ENCODE measurements at regions of chr12 and their contacts with region 1.

Region 1: GRCh38 chr12:110449799-110450497 is at the start of gene ARPC3:
- DNase-seq: peak; percentile 90 to 98 (median 94)
- ATAC-seq: peak; percentile 95
- H3K4me3 ChIP-seq: peak within 1 kb of the TSS; percentile 84
- H3K4me3 Mint-ChIP-seq: peak within 1 kb of the TSS; percentile 100
- H3K27ac ChIP-seq: peak within 1 kb of the TSS; percentile 92 to 94
- H3K27ac Mint-ChIP-seq: peak within 1 kb of the TSS; percentile 96
- H3K4me1 ChIP-seq: peaks cover 41% of the 10 kb centered on the region
- H3K4me1 Mint-ChIP-seq: peaks cover 47% of the 10 kb centered on the region
- H3K27me3 ChIP-seq: no peaks in the 10 kb centered on the region
- H3K27me3 Mint-ChIP-seq: no peaks in the 10 kb centered on the region
- CTCF ChIP-seq: peak; percentile 81
- total RNA-seq, gene ARPC3: 120 to 124 TPM

Region 2: DNA sequence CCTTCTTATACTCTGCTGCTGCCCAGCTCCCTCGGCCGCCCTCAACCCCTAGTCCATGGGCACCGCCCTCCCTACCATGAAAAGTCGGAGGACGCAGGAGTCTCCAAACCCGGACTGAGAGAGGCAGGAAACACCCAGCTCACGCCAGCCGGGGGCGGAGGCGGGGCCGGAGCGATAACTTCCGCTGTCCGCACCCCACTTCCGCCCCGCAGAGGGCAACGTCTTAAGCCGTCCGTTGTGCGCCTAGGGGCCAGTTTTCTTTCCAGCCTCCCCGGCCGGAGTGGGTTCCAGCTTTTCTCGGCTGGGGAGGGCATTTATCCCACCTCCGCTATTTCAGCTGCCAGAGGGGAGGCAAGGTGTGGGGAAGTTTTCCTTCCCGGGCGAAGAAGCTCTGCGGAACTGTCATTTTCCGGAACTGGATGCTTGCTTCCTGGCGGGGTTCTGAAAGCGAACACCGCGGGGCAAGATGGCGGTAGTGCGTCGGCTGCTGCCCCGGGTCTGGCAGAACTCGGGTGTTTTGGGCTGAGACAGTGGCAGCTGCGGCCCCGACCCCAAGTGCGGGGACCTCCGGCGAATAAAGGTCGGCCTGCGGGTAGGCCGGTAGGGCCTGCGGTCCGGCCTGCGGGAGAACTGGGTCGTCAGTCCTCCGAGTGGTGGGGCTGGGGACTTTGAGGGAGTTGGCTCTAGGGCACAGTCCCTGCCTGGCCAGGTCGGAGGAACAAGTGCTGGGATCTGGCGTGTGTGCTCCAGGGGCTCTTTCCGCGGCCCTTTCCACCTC is 972.6 kb before region 1 on chr12 and contains the starts of genes KCTD10 and UBE3B:
- CTCF ChIA-PET with region 1: interaction called, 3 read pairs
- POLR2A ChIA-PET with region 1: no interaction called
- intact Hi-C with region 1: loop called in 1 of 2 experiments (anchors 5 kb)
- DNase-seq: peak; percentile 74 to 93 (median 82)
- ATAC-seq: peak; percentile 91
- H3K4me3 ChIP-seq: peak within 1 kb of the TSS; percentile 90
- H3K4me3 Mint-ChIP-seq: peak within 1 kb of the TSS; percentile 98
- H3K27ac ChIP-seq: peak within 1 kb of the TSS; percentile 73 to 87
- H3K27ac Mint-ChIP-seq: peak within 1 kb of the TSS; percentile 92
- H3K4me1 ChIP-seq: peaks cover 30% of the 10 kb centered on the region
- H3K4me1 Mint-ChIP-seq: peaks cover 50% of the 10 kb centered on the region
- H3K27me3 ChIP-seq: no peaks in the 10 kb centered on the region
- H3K27me3 Mint-ChIP-seq: no peaks in the 10 kb centered on the region
- CTCF ChIP-seq: no peak
- total RNA-seq, gene KCTD10: 24.2 to 26.1 TPM
- total RNA-seq, gene UBE3B: 17.2 to 19.9 TPM

Region 3: DNA sequence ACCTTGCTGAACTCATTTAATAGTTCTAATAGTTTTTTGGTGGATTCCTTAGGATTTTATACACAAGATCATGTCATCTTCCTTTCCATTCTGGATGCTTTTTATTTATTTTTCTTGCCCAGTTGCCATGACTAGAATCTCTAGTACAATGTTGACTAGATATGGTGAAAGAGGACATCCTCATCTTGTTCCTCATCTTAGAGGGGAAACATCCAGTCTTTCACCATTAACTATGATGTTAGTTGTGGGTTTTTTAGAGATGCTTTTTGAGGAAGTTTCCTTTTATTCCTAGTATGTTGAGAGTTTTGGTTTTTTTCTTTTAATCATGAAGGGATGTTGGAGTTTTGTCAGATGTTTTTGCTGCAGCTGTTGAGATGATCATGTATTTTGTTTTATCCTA is 442.1 kb before region 1 on chr12:
- CTCF ChIA-PET with region 1: no interaction called
- POLR2A ChIA-PET with region 1: no interaction called
- intact Hi-C with region 1: no loop called
- DNase-seq: peak in 2 of 14 experiments; percentile 32 to 46
- ATAC-seq: no peak
- H3K4me3 ChIP-seq: no peak overlapping the region
- H3K4me3 Mint-ChIP-seq: peak overlapping the region; percentile 17
- H3K27ac ChIP-seq: no peak overlapping the region
- H3K27ac Mint-ChIP-seq: peak overlapping the region; percentile 32
- H3K4me1 ChIP-seq: peaks cover 54% of the 10 kb centered on the region
- H3K4me1 Mint-ChIP-seq: peaks cover 82% of the 10 kb centered on the region
- H3K27me3 ChIP-seq: no peaks in the 10 kb centered on the region
- H3K27me3 Mint-ChIP-seq: no peaks in the 10 kb centered on the region
- CTCF ChIP-seq: no peak

Region 4: DNA sequence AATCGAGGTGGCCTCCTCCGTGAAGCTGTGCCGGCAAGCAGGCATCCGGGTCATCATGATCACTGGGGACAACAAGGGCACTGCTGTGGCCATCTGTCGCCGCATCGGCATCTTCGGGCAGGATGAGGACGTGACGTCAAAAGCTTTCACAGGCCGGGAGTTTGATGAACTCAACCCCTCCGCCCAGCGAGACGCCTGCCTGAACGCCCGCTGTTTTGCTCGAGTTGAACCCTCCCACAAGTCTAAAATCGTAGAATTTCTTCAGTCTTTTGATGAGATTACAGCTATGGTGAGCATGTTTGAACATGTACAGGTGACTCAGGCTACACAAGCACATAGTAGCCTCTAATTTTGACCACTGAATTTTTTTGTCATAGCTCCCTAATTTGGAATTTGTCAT is 109.2 kb before region 1 on chr12:
- CTCF ChIA-PET with region 1: no interaction called
- POLR2A ChIA-PET with region 1: no interaction called
- intact Hi-C with region 1: no loop called
- DNase-seq: no peak
- ATAC-seq: no peak
- H3K4me3 ChIP-seq: no peak overlapping the region
- H3K4me3 Mint-ChIP-seq: no peak overlapping the region
- H3K27ac ChIP-seq: no peak overlapping the region
- H3K27ac Mint-ChIP-seq: no peak overlapping the region
- H3K4me1 ChIP-seq: no peaks in the 10 kb centered on the region
- H3K4me1 Mint-ChIP-seq: no peaks in the 10 kb centered on the region
- H3K27me3 ChIP-seq: no peaks in the 10 kb centered on the region
- H3K27me3 Mint-ChIP-seq: no peaks in the 10 kb centered on the region
- CTCF ChIP-seq: no peak

Region 5: DNA sequence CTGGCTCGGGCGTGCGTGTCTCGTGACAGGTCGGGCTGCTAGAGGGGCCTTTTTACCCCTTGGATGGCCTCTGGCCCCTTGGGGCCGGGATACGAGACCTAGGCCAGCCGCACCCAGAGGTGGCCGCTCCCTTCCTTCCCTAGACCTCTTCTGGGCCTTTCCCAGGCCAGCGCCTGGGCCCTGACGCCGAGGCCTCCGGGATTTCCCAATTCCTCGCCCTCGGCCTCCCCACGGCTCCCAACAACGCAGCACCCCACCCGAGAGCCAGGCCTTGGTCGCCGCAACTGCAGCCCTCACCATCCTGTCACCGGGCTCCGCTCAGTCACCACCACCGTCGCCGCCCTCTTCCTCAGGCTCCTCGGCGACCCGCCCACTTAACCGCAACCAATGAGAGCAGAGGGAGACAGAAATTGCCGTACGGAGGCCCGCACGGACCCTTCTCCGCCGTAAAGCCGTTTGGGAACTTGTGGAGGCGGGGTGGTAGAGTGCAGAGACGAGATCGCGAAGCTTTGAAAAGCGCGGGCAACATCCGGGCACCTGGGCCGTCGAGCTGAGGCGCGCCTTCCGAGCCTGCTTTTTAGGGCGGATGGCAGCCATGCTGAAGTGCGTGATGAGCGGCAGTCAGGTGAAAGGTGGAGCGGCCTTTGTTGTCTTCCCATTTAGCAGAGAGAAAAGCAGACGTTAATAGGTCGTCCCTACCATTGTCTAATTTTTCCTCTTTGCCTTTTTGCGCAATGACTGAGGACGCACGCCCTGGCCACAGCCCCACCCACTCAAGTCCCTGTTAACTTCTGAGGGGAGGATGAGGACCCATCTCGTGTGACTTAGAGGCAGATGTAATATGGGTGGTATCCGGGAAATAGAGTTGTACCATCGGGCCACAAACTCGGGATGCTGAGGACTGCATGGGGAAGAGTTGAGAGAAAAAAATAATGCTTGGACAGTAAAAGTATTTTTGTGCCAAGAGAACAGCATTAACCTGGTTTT is 52.1 kb after region 1 on chr12 and contains the starts of genes RAD9B and VPS29:
- CTCF ChIA-PET with region 1: interaction called, 48 read pairs
- POLR2A ChIA-PET with region 1: interaction called, 14 read pairs
- intact Hi-C with region 1: loop called (anchors 1 to 2 kb)
- DNase-seq: peak; percentile 97 to 100 (median 98)
- ATAC-seq: peak; percentile 92
- H3K4me3 ChIP-seq: peak within 1 kb of the TSS; percentile 96
- H3K4me3 Mint-ChIP-seq: peak within 1 kb of the TSS; percentile 98
- H3K27ac ChIP-seq: peak within 1 kb of the TSS; percentile 90 to 93
- H3K27ac Mint-ChIP-seq: peak within 1 kb of the TSS; percentile 90
- H3K4me1 ChIP-seq: peaks cover 24% of the 10 kb centered on the region
- H3K4me1 Mint-ChIP-seq: peaks cover 39% of the 10 kb centered on the region
- H3K27me3 ChIP-seq: no peaks in the 10 kb centered on the region
- H3K27me3 Mint-ChIP-seq: no peaks in the 10 kb centered on the region
- CTCF ChIP-seq: no peak
- total RNA-seq, gene RAD9B: 0.31 to 0.63 TPM
- total RNA-seq, gene VPS29: 62.5 to 64.9 TPM

Region 6: GRCh38 chr12:110548678-110549077 is 98.7 kb after region 1 on chr12:
- CTCF ChIA-PET with region 1: interaction called, 22 read pairs
- POLR2A ChIA-PET with region 1: interaction called, 3 read pairs
- intact Hi-C with region 1: loop called (anchors 2 to 5 kb)
- DNase-seq: no peak
- ATAC-seq: no peak
- H3K4me3 ChIP-seq: no peak overlapping the region
- H3K4me3 Mint-ChIP-seq: no peak overlapping the region
- H3K27ac ChIP-seq: no peak overlapping the region
- H3K27ac Mint-ChIP-seq: no peak overlapping the region
- H3K4me1 ChIP-seq: peaks cover 7% of the 10 kb centered on the region
- H3K4me1 Mint-ChIP-seq: peaks cover 39% of the 10 kb centered on the region
- H3K27me3 ChIP-seq: no peaks in the 10 kb centered on the region
- H3K27me3 Mint-ChIP-seq: no peaks in the 10 kb centered on the region
- CTCF ChIP-seq: no peak

Region 7: GRCh38 chr12:110600254-110600653 is 150.3 kb after region 1 on chr12:
- CTCF ChIA-PET with region 1: interaction called, 60 read pairs
- POLR2A ChIA-PET with region 1: interaction called, 23 read pairs
- intact Hi-C with region 1: loop called (anchors 1 kb)
- DNase-seq: peak in 3 of 14 experiments; percentile 70 to 76 (median 74)
- ATAC-seq: peak; percentile 46
- H3K4me3 ChIP-seq: no peak overlapping the region
- H3K4me3 Mint-ChIP-seq: no peak overlapping the region
- H3K27ac ChIP-seq: no peak overlapping the region
- H3K27ac Mint-ChIP-seq: peak overlapping the region; percentile 0
- H3K4me1 ChIP-seq: peaks cover 5% of the 10 kb centered on the region
- H3K4me1 Mint-ChIP-seq: peaks cover 10% of the 10 kb centered on the region
- H3K27me3 ChIP-seq: no peaks in the 10 kb centered on the region
- H3K27me3 Mint-ChIP-seq: no peaks in the 10 kb centered on the region
- CTCF ChIP-seq: peak; percentile 71

Region 8: GRCh38 chr12:110742718-110743570 is 293.0 kb after region 1 on chr12 and contains the start of gene PPP1CC:
- CTCF ChIA-PET with region 1: interaction called, 7 read pairs
- POLR2A ChIA-PET with region 1: interaction called, 13 read pairs
- intact Hi-C with region 1: loop called in 1 of 2 experiments (anchors 5 kb)
- DNase-seq: peak; percentile 81 to 97 (median 90)
- ATAC-seq: peak; percentile 90
- H3K4me3 ChIP-seq: peak within 1 kb of the TSS; percentile 95
- H3K4me3 Mint-ChIP-seq: peak within 1 kb of the TSS; percentile 100
- H3K27ac ChIP-seq: peak within 1 kb of the TSS; percentile 50 to 71
- H3K27ac Mint-ChIP-seq: peak within 1 kb of the TSS; percentile 98
- H3K4me1 ChIP-seq: peaks cover 22% of the 10 kb centered on the region
- H3K4me1 Mint-ChIP-seq: peaks cover 57% of the 10 kb centered on the region
- H3K27me3 ChIP-seq: no peaks in the 10 kb centered on the region
- H3K27me3 Mint-ChIP-seq: no peaks in the 10 kb centered on the region
- CTCF ChIP-seq: no peak
- total RNA-seq, gene PPP1CC: 146 to 150 TPM